ENCODE measurements at regions of chr21 and their contacts with region 1.

Region 1: DNA sequence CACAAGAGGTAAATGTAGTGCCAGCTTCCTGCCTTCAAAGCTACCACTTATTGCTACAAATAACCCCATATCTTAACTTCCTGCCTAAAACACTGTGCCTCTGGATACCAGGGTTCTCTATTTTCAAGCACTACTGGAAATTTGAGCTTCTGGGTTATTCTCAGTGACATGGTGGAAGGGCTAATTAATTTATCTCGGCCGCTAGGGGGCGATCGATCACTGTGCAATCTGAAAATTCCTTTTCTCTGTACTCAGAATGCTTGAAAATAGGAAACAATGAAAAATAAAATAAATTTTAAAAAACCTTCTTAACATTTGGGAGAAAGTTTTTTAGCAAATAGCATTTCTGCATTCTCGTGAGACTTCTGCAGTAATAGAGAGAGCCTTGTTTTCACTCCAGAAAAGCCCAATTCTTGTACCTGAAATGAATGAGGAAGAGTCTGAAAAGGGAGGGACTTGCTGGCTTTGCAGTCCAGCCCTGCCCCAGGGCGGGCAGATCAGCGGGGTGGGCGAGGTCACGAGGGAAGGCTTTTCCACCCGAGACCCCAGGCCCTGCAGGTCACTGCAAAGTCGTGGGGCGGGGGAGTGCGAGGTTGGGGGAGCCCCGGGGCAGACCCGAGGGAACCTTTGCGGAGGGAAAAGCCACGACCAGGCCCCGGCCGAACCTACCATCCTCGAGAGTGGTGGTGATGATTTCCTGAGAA is 276.7 kb downstream of the PCP4 start:
- DNase-seq: peak; percentile 24 to 44
- ATAC-seq: peak in 3 of 8 donors; percentile 32 to 60 (median 53)
- H3K4me3 ChIP-seq: no peak overlapping the region
- H3K27ac ChIP-seq: no peak overlapping the region
- H3K4me1 ChIP-seq: no peaks in the 10 kb centered on the region
- H3K27me3 ChIP-seq: peaks cover 0 to 22% (median 0%) of the 10 kb centered on the region in 7 donors
- CTCF ChIP-seq: peak; percentile 45 to 84 (median 73)

Region 2: GRCh38 chr21:40186045-40186444 is 42.1 kb after region 1 on chr21:
- intact Hi-C with region 1: no loop called
- DNase-seq: peak in 1 of 2 donors; percentile 21
- ATAC-seq: peak in 3 of 8 donors; percentile 67 to 72 (median 70)
- H3K4me3 ChIP-seq: no peak overlapping the region
- H3K27ac ChIP-seq: no peak overlapping the region
- H3K4me1 ChIP-seq: peaks cover 0 to 8% (median 0%) of the 10 kb centered on the region in 9 donors
- H3K27me3 ChIP-seq: peaks cover 0 to 4% (median 0%) of the 10 kb centered on the region in 7 donors
- CTCF ChIP-seq: no peak

Region 3: GRCh38 chr21:40254540-40255465 is 110.8 kb after region 1 on chr21:
- intact Hi-C with region 1: no loop called
- DNase-seq: no peak
- ATAC-seq: no peak
- H3K4me3 ChIP-seq: no peak overlapping the region
- H3K27ac ChIP-seq: no peak overlapping the region
- H3K4me1 ChIP-seq: no peaks in the 10 kb centered on the region
- H3K27me3 ChIP-seq: peaks cover 0 to 5% (median 0%) of the 10 kb centered on the region in 7 donors
- CTCF ChIP-seq: no peak

Region 4: DNA sequence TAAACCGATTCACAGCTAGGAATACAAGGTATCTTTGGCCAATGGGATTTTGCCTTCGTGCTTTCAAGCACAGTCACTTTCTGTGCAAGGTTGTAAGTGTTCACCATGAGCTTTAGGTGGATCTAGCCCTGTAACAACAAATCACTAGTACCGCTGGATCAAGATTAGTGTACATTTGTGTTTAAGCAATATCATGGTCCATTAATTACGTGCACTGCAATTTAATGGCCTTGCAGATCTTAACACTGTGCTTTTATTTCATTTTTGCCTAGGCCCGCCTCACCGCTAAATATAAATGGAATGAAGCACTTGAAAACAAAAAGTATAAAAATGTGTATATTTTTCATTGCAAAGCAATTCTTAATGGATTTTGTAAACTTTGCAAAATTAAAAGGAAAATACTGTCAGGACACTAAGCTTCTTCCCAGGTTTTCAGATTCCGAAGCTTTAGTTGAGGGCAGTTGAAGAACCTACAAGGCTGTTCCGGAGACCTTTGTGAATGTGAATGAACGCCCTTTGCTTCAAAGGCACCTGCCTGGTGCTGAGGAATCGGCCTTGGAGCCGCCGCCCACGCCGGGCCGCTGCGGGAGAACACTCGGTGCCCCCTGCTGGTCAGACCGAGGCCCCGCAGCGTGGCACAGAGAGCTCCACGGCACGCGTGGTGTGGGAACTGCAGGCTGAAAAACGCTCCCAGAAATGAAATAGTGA is 242.1 kb after region 1 on chr21:
- intact Hi-C with region 1: loop called (anchors 1 to 10 kb)
- DNase-seq: peak; percentile 31 to 58
- ATAC-seq: peak in 5 of 8 donors; percentile 60 to 81 (median 72)
- H3K4me3 ChIP-seq: no peak overlapping the region
- H3K27ac ChIP-seq: no peak overlapping the region
- H3K4me1 ChIP-seq: peaks cover 0 to 6% (median 0%) of the 10 kb centered on the region in 9 donors
- H3K27me3 ChIP-seq: peaks cover 0 to 32% (median 0%) of the 10 kb centered on the region in 7 donors
- CTCF ChIP-seq: peak; percentile 65 to 86 (median 80)

Region 5: GRCh38 chr21:41133896-41134522 is 990.0 kb after region 1 on chr21:
- intact Hi-C with region 1: loop called in 1 of 10 experiments (anchors 5 kb)
- DNase-seq: no peak
- ATAC-seq: peak in 2 of 8 donors; percentile 30 to 55
- H3K4me3 ChIP-seq: no peak overlapping the region
- H3K27ac ChIP-seq: no peak overlapping the region
- H3K4me1 ChIP-seq: no peaks in the 10 kb centered on the region
- H3K27me3 ChIP-seq: peaks cover 0 to 27% (median 0%) of the 10 kb centered on the region in 7 donors
- CTCF ChIP-seq: peak in 8 of 9 donors; percentile 34 to 65 (median 56)

Measured in heart right ventricle (tissue), 16 donors.